ENCODE measurements at regions of chr3 and their contacts with region 1.

Region 1: GRCh38 chr3:69324362-69325025 is 61.4 kb downstream of the FRMD4B start:
- DNase-seq: no peak
- ATAC-seq: no peak

Region 2: DNA sequence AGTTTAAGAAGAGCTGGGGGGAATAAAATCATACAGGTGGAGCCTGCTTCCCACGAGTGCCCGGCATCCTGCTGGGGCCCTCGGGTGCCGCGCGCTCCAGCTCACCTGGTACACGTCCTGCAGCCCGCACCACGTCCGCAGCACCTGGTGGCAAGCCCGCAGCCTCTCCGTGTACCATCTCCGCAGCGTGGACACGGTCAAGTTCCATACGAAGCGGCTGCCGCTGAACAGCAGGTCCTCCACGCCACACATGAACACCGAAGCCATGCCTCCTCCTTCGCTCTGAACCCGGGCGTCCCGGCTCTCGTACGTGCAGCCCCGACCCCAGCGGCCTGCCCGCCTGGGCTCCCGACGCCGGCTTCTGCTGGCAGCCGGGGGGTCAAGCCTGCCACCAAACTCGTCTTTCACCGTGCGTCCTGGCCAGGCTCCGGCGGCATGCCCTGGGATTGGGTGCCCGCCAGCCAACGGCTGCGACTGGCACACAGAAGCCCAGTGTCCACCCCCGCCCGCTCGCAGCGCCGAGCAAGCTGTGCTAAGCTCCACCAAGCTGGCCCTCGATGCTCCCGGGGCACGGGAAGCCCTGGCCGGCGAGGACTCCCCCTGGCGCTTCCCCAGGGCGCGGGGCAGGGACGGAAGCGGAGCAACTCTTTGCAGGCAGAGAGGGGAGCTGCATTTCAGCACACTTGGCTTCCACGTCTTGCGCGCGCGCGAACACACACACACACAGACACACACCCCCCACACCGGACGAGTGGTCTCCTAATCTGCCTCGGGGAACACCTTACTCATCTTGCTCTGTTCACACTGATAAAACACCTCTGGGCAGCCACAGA is 61.4 kb after region 1 on chr3 and contains the start of gene FRMD4B:
- intact Hi-C with region 1: no loop called
- DNase-seq: peak; percentile 92
- ATAC-seq: peak; percentile 90
- total RNA-seq, gene FRMD4B: 16.0 TPM

Region 3: GRCh38 chr3:69410250-69410649 is 85.8 kb after region 1 on chr3:
- intact Hi-C with region 1: loop called (anchors 2 kb)
- DNase-seq: no peak
- ATAC-seq: peak; percentile 83

Region 4: GRCh38 chr3:69474186-69474585 is 149.7 kb after region 1 on chr3:
- intact Hi-C with region 1: no loop called
- DNase-seq: no peak
- ATAC-seq: no peak

Region 5: GRCh38 chr3:69499899-69500421 is 175.5 kb after region 1 on chr3:
- intact Hi-C with region 1: no loop called
- DNase-seq: peak; percentile 78
- ATAC-seq: peak; percentile 95

Region 6: GRCh38 chr3:69532544-69533224 is 208.2 kb after region 1 on chr3:
- intact Hi-C with region 1: loop called (anchors 10 kb)
- DNase-seq: no peak
- ATAC-seq: no peak

Region 7: GRCh38 chr3:69671082-69671952 is 346.8 kb after region 1 on chr3:
- intact Hi-C with region 1: loop called (anchors 2 kb)
- DNase-seq: no peak
- ATAC-seq: peak; percentile 69

Measured in Right ventricle myocardium inferior (tissue), 1 donor.